ENCODE measurements at regions of chr15 and their contacts with region 1.

Region 1: DNA sequence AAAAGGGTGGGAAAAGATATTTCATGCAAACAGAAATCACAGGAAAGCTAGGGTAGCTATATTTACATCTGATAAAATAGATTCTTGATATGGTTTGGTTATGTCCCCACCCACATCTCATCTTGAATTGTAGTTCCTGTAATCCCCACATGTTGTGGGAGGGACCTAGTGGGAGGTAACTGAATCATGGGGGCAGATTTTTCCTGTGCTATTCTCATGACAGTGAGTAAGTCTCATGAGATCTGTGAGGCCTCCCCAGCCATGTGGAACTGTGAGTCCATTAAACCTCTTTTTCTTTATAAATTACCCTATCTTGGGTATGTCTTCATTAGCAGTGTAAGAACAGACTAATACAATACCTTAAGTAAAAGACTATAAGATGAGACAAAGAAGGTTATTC is 558.1 kb downstream of the RSL24D1 start:
- ATAC-seq: no peak
- H3K4me3 ChIP-seq: no peak overlapping the region
- H3K27ac ChIP-seq: no peak overlapping the region
- H3K4me1 ChIP-seq: no peaks in the 10 kb centered on the region

Region 2: GRCh38 chr15:54388746-54389145 is 249.9 kb before region 1 on chr15:
- in situ Hi-C with region 1: no loop called
- ATAC-seq: no peak
- H3K4me3 ChIP-seq: no peak overlapping the region
- H3K27ac ChIP-seq: no peak overlapping the region
- H3K4me1 ChIP-seq: no peaks in the 10 kb centered on the region

Region 3: DNA sequence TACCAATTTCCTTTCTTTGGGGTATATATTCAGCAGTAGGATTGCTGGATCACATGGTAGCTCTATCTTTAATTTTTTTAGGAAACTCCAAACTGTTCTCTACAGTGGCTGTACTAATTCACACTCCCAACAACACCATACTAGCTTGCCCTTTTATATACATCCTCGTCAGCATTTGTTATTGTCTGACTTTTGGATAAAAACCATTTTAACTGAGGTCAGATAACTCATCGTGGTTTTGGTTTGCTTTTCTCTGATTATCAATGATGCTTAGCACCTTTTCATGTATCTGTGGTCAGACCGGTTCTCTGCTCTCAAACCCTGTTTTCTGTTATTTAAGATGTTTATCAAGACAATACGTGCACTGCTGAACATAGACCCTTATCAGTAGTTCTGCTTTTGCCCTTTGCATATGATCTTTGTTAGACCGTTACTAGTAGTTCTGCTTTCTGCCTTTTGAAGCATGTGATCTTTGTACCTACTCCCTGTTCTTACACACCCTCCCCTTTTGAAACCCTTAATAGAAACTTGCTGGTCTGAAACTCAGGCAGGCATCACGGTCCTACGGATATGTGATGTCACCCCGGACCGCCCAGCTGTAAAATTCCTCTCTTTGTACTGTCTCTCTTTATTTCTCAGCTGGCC is 83.8 kb after region 1 on chr15:
- in situ Hi-C with region 1: loop called in 1 of 9 experiments (anchors 25 kb)
- ATAC-seq: no peak
- H3K4me3 ChIP-seq: no peak overlapping the region
- H3K27ac ChIP-seq: no peak overlapping the region
- H3K4me1 ChIP-seq: no peaks in the 10 kb centered on the region

Region 4: DNA sequence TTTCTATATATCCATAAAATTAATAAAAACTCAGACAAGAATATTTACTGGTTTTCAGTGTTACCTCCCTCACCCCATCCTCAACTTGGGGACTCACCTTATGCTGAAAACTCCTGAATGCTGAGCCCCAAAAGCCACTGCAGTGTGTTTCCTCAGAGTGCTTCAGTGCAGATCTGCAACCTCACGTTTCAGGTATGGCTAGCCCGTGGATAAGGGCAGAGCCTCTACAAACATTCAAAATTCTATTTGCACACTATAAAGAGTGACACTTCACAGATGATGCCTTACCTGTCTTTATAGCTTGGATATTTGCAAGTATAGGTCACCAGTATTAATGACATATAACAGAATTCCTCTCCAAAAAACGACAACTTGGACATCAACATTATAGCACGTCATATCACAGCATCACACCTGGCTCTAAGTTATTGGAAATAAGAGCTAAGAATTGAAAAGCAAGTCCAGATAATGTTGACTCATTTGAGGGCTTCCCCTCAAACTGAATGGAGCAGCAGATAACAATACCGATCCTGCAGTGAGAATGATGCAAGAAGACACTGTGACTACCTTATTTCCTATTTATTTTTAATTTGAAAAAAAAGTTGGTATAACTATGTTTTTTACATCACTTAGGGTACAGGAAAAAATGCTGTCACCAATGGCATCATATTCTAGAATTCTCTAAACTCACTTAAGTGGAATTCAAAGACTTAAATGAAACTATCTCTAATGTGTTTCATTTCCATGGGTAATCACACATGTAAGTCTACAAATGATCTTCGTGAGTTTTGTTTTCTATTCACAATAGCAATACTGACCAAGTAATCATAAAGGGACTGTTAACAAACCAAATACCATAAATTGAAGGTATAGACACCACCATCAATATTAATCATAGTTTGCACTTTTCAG is 598.8 kb after region 1 on chr15:
- in situ Hi-C with region 1: no loop called
- ATAC-seq: no peak
- H3K4me3 ChIP-seq: no peak overlapping the region
- H3K27ac ChIP-seq: no peak overlapping the region
- H3K4me1 ChIP-seq: no peaks in the 10 kb centered on the region